GM13976 (cell line): ENCODE measurements at regions of chr10 and their contacts with region 1.

Region 1: DNA sequence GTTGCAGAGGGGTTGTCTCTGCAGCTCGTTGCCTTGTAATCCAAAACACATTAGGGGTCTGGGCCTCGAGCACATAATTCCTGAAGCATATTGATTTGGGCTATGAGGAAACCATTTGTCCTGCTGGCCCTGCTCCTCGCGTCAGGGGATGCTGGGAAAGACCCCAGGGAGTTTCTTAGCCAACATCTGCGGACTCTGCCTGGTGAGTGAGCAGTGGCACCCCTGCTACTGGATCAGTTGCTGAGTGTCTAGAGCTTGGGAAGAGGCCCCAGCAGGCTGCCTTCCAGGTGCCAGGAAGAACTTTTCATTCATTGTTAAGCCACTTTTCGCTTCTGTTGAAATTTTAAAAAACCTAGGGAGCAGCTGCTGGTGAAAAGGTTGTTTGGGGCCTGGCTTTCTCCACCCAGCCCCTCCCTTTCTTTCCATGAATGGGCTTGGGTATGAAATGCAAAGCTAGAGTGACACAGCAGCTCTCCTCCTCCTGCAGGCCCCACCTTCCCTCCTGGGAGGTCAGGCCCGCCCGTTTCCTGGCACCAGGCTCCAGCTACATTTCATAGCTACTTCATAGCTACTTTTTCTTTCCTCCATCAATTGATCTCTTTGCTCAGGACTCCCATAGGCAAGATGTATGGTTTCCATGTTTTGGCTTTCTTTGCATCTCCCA is 26.8 kb downstream of the TACR2 start:
- DNase-seq: no peak
- CTCF ChIP-seq: no peak

Region 2: DNA sequence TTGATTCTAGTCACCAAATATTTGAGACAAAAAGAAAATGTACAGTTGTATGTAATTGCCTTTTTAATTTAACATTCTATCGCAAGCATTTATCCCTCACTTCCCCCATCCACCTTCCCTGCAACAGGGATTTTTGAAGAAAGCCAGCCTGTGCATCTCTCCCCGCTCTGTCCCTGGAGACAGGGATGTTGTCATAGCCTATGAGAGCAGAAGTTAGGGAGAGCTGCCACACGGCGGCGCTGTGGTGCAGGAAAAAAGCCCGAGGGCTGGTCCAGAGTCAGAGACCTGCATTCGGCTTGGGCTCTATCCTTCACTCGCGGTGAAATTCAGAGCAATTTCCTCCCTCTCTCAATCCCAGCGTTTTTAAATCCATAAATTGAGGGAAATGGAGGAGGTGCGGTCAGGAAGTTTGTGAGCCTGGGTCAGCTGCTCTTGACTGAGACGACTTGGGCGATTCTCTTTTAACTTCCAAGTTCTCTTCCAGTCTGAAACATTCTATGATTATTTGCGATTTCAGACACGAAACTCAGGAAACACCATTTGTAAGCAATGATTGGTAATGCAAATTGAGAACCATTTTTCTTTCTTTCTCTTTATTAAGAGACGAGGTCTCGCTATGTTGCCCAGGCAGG is 152.3 kb before region 1 on chr10:
- in situ Hi-C with region 1: loop called (anchors 5 kb)
- DNase-seq: peak; percentile 90
- CTCF ChIP-seq: peak; percentile 91

Region 3: GRCh38 chr10:69285699-69286098 is 104.3 kb before region 1 on chr10:
- in situ Hi-C with region 1: no loop called
- DNase-seq: no peak
- CTCF ChIP-seq: no peak